B cell (primary cell): ENCODE measurements at regions of chr10 and their contacts with region 1.

Region 1: GRCh38 chr10:7525314-7526016 is 114.6 kb upstream of the SFMBT2 start:
- DNase-seq: peak; percentile 75
- ATAC-seq: peak; percentile 77
- H3K4me3 ChIP-seq: no peak overlapping the region
- H3K4me3 Mint-ChIP-seq: no peak overlapping the region
- H3K27ac ChIP-seq: no peak overlapping the region
- H3K27ac Mint-ChIP-seq: no peak overlapping the region
- H3K4me1 ChIP-seq: peaks cover 5 to 8% of the 10 kb centered on the region in 2 donors
- H3K4me1 Mint-ChIP-seq: peaks cover 14% of the 10 kb centered on the region
- H3K27me3 ChIP-seq: peaks cover 0 to 1% (median 0%) of the 10 kb centered on the region in 4 experiments
- H3K27me3 Mint-ChIP-seq: peaks cover 16% of the 10 kb centered on the region
- CTCF ChIP-seq: peak; percentile 87

Region 2: GRCh38 chr10:7445474-7446185 is 79.8 kb before region 1 on chr10:
- CTCF ChIA-PET with region 1: interaction called, 3 read pairs
- POLR2A ChIA-PET with region 1: no interaction called
- intact Hi-C with region 1: loop called (anchors 10 kb)
- DNase-seq: peak; percentile 61
- ATAC-seq: peak; percentile 74
- H3K4me3 ChIP-seq: peak overlapping the region in 1 of 5 experiments; percentile 31
- H3K4me3 Mint-ChIP-seq: peak overlapping the region; percentile 68
- H3K27ac ChIP-seq: peak overlapping the region; percentile 21 to 64
- H3K27ac Mint-ChIP-seq: peak overlapping the region; percentile 57
- H3K4me1 ChIP-seq: peaks cover 22 to 28% of the 10 kb centered on the region in 2 donors
- H3K4me1 Mint-ChIP-seq: peaks cover 26% of the 10 kb centered on the region
- H3K27me3 ChIP-seq: no peaks in the 10 kb centered on the region
- H3K27me3 Mint-ChIP-seq: no peaks in the 10 kb centered on the region
- CTCF ChIP-seq: no peak

Region 3: GRCh38 chr10:7515439-7515838 is 10.0 kb before region 1 on chr10:
- CTCF ChIA-PET with region 1: interaction called, 13 read pairs
- POLR2A ChIA-PET with region 1: no interaction called
- intact Hi-C with region 1: no loop called
- DNase-seq: no peak
- ATAC-seq: no peak
- H3K4me3 ChIP-seq: no peak overlapping the region
- H3K4me3 Mint-ChIP-seq: no peak overlapping the region
- H3K27ac ChIP-seq: no peak overlapping the region
- H3K27ac Mint-ChIP-seq: no peak overlapping the region
- H3K4me1 ChIP-seq: peaks cover under 1 to 2% of the 10 kb centered on the region in 2 donors
- H3K4me1 Mint-ChIP-seq: peaks cover 6% of the 10 kb centered on the region
- H3K27me3 ChIP-seq: no peaks in the 10 kb centered on the region
- H3K27me3 Mint-ChIP-seq: peaks cover 8% of the 10 kb centered on the region
- CTCF ChIP-seq: no peak

Region 4: GRCh38 chr10:8059959-8060703 is 534.7 kb after region 1 on chr10:
- CTCF ChIA-PET with region 1: no interaction called
- POLR2A ChIA-PET with region 1: no interaction called
- intact Hi-C with region 1: no loop called
- DNase-seq: peak; percentile 22
- ATAC-seq: no peak
- H3K4me3 ChIP-seq: peak overlapping the region in 3 of 5 experiments; percentile 29 to 54 (median 44)
- H3K4me3 Mint-ChIP-seq: peak overlapping the region; percentile 61
- H3K27ac ChIP-seq: no peak overlapping the region
- H3K27ac Mint-ChIP-seq: peak overlapping the region; percentile 54
- H3K4me1 ChIP-seq: peaks cover 35 to 47% of the 10 kb centered on the region in 2 donors
- H3K4me1 Mint-ChIP-seq: peaks cover 29% of the 10 kb centered on the region
- H3K27me3 ChIP-seq: peaks cover 0 to 55% (median 34%) of the 10 kb centered on the region in 4 experiments
- H3K27me3 Mint-ChIP-seq: peaks cover 56% of the 10 kb centered on the region
- CTCF ChIP-seq: no peak

Region 5: DNA sequence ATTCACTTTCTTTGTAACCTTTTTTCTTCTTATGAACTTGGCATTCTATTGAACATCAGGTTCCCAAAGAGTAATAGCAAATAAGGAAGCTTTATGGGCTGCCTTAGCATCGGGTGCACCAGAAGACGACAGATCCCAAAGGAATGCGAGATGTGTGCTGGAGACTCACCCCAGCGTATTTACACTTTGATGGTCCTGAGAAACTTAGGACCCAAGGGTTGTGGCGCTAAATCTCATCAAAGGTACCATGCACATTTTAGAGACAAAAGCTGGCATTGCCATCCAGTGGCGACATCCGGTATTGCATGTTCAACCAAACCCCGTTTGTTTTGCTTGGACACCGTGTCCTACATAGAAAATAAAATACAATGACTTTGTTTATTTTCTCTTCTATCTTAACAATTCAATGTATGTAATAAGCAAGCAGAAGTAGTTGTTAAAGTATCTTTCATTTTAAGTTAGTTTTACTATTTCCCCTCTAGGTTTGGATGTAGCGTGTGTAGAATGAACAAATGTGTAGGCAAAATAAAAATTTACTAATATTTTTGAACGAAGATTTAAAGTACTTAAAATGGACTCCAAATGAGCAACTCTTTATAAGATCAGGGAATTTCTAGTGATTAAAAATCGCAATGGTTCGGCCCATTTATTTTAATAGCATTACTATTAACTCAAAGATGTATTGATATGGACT is 1683.8 kb after region 1 on chr10:
- CTCF ChIA-PET with region 1: interaction called, 28 read pairs
- POLR2A ChIA-PET with region 1: no interaction called
- intact Hi-C with region 1: no loop called
- DNase-seq: peak; percentile 62
- ATAC-seq: peak; percentile 31
- H3K4me3 ChIP-seq: no peak overlapping the region
- H3K4me3 Mint-ChIP-seq: no peak overlapping the region
- H3K27ac ChIP-seq: no peak overlapping the region
- H3K27ac Mint-ChIP-seq: no peak overlapping the region
- H3K4me1 ChIP-seq: no peaks in the 10 kb centered on the region
- H3K4me1 Mint-ChIP-seq: no peaks in the 10 kb centered on the region
- H3K27me3 ChIP-seq: no peaks in the 10 kb centered on the region
- H3K27me3 Mint-ChIP-seq: peaks cover 7% of the 10 kb centered on the region
- CTCF ChIP-seq: peak; percentile 94